ENCODE measurements at regions of chr1 and their contacts with region 1.

Region 1: DNA sequence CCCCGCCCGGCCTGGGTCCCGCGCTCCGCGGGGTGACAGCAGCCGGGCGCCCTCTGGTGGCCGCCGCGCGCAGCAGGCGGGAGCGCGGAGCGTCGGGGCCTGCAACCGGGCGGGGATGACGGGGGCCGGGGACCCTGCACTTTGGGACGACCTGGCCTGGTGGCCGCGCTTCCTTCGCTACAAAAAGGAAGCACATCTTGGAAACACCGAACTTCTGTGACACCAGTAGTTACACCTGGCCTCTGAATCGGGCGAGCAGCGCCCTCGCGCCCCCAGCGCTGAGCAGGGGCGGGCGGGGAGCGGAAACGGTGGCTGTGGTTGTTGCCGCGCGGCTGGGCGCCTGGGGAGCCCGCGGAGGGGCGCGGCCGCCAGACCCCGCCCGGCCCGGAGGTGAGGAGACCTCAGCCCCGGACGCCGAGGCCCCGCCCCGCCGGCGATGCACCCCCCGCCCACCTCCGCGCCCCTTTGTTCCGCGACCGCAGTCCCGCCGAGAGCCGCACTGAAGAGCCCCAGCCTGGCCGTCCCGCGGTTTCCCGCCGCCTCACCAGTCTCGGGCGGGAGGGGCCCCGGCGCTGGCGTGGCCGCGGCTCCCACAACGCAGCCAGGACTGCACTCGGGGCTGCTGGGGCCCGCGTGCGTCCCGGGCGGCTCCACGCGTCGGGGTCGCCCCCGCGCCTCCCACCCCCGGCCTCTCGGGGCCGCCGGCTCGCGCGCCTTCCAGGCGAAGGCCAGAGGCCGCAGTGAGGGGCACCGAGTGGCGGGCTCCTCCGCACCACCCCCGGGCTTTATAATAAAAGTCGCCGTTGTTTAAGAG is 59.3 kb downstream of the H3-3A start:
- DNase-seq: peak in 1 of 2 donors; percentile 75
- H3K4me3 ChIP-seq: peak overlapping the region; percentile 73 to 84
- H3K27ac ChIP-seq: peak overlapping the region; percentile 16 to 56
- H3K4me1 ChIP-seq: no peaks in the 10 kb centered on the region
- H3K27me3 ChIP-seq: no peaks in the 10 kb centered on the region
- CTCF ChIP-seq: peak; percentile 50 to 96 (median 75)

Region 2: GRCh38 chr1:226062558-226063223 is 59.1 kb before region 1 on chr1 and contains the start of gene H3-3A:
- intact Hi-C with region 1: loop called (anchors 1 kb)
- DNase-seq: peak; percentile 92 to 99
- H3K4me3 ChIP-seq: peak within 1 kb of the TSS; percentile 69 to 91
- H3K27ac ChIP-seq: peak within 1 kb of the TSS; percentile 96 to 97
- H3K4me1 ChIP-seq: peaks cover 0 to 32% of the 10 kb centered on the region in 2 donors
- H3K27me3 ChIP-seq: no peaks in the 10 kb centered on the region
- CTCF ChIP-seq: peak in 1 of 3 experiments; percentile 13
- total RNA-seq, gene H3-3A: 214 TPM

Region 3: DNA sequence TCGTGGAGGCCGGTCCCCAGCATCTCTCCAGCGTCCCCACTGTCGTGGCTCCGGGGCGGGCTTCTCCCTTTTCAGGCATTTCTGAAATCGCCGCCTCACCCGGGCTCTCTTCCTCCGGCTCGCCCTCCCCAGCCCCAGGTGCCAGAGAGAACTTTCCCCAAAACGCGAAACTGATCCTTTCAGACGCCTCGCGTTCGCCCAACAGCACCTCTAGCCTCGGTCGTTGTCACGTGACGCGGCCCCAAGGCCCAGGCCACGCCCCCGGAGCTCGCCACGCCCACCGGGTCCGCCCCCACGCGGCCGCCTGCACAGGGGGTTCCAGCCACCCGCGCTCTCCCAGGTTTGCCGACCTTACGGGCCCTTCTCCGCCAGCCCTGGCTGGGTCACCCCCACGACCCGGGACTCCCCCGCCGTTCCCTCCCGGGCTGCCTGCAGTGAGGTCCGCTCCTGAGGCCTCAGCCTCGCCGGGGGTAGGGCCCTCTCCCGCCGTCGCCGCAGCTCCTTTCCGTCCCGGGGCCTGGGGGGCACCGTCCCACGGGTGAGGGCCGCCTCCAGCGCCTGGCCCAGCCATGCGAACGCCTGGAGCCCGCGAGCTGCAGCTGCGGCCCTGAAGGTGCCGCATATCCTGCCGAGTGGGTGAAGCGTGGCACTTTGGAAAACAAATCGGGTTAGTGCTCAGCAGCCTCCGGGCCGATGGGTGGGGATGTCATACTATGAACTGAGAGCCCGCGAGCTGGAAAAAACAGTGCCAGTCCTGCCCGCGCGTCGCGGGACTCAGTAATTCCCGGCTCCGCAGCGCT is 38.3 kb before region 1 on chr1:
- intact Hi-C with region 1: loop called (anchors 1 kb)
- DNase-seq: peak; percentile 60 to 94
- H3K4me3 ChIP-seq: peak overlapping the region; percentile 83 to 92
- H3K27ac ChIP-seq: peak overlapping the region; percentile 75 to 85
- H3K4me1 ChIP-seq: peaks cover 4 to 11% of the 10 kb centered on the region in 2 donors
- H3K27me3 ChIP-seq: no peaks in the 10 kb centered on the region
- CTCF ChIP-seq: peak in 2 of 3 experiments; percentile 13 to 20

Region 4: DNA sequence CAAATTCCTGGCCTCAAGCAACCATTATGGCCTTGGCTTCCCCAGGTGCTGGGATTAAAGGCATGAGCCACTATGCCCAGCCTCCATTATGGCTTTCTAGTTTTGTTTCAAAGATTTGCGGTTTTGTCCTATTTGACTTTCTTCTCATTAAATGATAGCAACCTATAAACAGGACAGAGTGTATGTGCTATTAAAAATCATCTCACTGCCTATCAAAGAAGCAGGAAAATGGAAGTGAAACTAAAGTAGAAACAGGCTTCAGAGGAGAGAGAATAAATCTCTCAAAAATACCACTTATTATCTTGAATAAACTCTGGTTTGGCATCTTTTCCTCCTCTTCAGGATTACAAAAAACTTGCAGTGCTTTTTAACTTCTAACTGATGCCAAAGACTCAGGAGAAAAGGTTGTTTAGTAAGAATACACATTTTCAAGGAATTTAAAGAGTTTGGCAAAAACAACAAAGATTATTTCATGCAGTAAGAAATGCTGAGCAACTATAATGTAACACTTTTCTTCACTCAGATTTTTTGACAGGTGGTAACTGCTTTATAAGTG is 36.0 kb after region 1 on chr1:
- intact Hi-C with region 1: no loop called
- DNase-seq: no peak
- H3K4me3 ChIP-seq: no peak overlapping the region
- H3K27ac ChIP-seq: peak overlapping the region in 1 of 2 donors; percentile 8
- H3K4me1 ChIP-seq: no peaks in the 10 kb centered on the region
- H3K27me3 ChIP-seq: no peaks in the 10 kb centered on the region
- CTCF ChIP-seq: no peak

Region 5: DNA sequence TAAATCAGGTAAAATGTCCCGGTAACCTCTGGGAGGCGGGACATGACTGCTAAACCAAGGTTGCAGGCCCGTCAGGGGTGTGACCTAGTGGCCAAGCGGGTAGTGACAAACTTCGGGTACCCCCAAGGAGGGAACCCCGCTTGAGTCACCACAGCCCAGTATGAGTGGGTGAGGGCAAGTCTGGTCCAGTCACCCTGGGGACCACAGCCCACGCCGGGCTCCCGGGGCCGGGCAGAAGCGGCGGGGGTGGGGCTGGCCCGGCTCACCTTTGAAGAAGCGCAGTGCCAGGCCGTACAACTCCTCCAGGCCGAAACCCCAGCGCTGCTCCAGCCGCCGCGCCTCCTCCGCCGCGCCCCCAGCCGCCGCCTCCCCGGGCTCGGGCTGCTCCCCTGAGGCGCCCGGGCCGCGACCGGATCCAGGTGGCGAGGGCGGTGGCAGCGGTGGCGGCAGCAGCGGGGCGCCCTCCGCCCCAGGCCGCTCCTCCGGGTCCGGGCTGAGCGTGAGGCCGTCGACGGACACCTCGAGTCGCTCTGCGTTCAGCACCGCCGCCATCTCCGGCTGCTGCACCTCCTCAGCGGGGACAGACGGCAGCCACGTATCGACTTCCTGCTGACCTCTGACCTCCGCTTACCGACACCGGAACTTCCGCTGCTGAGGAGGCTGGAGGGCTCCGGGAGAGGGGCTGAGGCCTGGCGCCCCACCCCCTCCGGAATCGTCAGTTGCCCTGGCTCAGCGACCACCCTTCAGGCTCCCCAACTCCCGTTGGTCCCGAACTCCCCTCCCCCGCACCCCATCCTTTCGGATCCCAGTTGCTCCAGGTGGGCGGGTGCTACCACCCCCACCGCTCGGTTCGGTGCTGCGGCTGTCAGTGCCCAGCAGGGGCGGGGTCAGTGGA is 64.6 kb after region 1 on chr1 and contains the start of gene ACBD3:
- intact Hi-C with region 1: loop called (anchors 2 kb)
- DNase-seq: peak; percentile 57 to 93
- H3K4me3 ChIP-seq: peak within 1 kb of the TSS; percentile 96 to 100
- H3K27ac ChIP-seq: peak within 1 kb of the TSS; percentile 87 to 98
- H3K4me1 ChIP-seq: peaks cover 6 to 17% of the 10 kb centered on the region in 2 donors
- H3K27me3 ChIP-seq: no peaks in the 10 kb centered on the region
- CTCF ChIP-seq: no peak
- total RNA-seq, gene ACBD3: 31.5 TPM

Region 6: DNA sequence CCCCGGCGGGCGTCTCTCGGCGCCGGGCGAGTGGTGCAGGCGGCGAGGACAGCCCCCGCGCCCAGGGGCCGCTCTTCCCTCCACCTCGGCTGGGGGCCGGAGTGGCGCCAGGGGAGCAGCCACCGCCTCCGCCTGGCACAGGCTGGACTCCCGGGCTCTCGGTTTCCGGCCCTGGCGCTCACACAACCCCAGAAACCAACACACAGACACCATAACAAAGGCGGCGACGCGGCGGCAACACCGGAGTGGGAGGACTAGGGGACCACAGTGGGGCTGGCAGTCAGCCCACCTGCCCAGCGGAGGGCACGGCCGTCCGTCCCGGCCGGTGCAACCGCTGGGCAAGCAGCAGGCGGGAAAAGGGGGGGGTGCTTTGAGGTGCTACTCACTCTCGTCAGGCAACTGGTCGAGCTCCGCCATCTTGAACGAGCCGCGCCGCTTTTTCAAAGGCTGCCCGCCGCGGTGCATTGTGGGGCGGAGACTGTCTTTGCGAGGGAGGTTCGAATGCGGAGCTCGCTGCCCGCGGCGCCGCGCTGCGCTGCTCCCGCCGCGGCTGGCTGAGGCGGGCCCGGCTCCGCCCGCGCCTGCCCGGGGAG is 187.0 kb after region 1 on chr1 and contains the start of gene LIN9:
- intact Hi-C with region 1: loop called (anchors 5 kb)
- DNase-seq: peak; percentile 67 to 93
- H3K4me3 ChIP-seq: peak within 1 kb of the TSS; percentile 93 to 100
- H3K27ac ChIP-seq: peak within 1 kb of the TSS; percentile 63 to 74
- H3K4me1 ChIP-seq: peaks cover 2 to 8% of the 10 kb centered on the region in 2 donors
- H3K27me3 ChIP-seq: no peaks in the 10 kb centered on the region
- CTCF ChIP-seq: no peak
- total RNA-seq, gene LIN9: 0.43 TPM

Measured in ascending aorta (tissue), 2 donors.